ENCODE measurements at regions of chr6 and their contacts with region 1.

Region 1: DNA sequence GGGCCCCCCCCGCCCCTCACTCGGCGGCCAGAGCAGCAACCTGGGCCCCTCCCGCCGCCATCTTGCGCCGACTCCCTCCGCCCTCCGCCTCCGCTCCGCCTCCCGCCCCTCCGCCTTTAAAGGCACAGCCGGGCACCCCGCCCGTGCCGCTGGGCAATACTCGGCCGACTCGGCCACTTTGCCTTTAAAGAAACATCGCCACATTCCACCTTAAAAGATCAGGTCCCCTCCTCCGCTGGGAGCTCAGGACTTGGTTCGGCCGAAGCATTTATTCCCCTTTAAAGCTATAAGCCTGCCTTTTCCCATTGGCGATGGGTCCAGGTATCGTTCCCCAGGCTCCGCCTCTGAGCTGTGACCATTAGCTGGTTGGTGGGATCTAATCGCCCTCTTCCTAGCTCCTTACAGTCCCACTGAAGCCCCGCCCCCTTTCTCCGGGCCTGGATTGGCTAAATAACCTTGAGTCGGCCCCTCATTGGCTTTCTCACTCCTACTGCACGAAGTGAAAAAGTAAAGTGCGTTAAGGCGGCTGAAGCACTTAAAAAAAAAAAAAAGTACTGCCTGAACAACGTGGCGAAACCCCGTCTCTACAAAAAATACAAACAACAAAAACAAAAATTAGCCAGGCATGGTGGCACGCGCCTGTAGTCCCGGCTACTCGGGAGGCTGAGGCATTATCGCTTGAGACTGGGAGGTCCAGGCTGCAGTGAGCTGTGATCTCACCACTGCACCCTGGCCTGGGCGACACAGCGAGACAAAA is at the start of gene ZBTB22:
- DNase-seq: peak; percentile 98
- H3K4me3 Mint-ChIP-seq: peak within 1 kb of the TSS; percentile 96
- H3K27ac Mint-ChIP-seq: peak within 1 kb of the TSS; percentile 96
- H3K4me1 Mint-ChIP-seq: peaks cover 53% of the 10 kb centered on the region
- H3K27me3 Mint-ChIP-seq: no peaks in the 10 kb centered on the region
- total RNA-seq, gene ZBTB22: 11.3 and 14.3 TPM in 2 replicates

Region 2: GRCh38 chr6:33075568-33076405 is 242.1 kb before region 1 on chr6 and contains the start of gene HLA-DPB1:
- intact Hi-C with region 1: no loop called
- DNase-seq: peak; percentile 85
- H3K4me3 Mint-ChIP-seq: peak within 1 kb of the TSS; percentile 80
- H3K27ac Mint-ChIP-seq: peak within 1 kb of the TSS; percentile 79
- H3K4me1 Mint-ChIP-seq: peaks cover 48% of the 10 kb centered on the region
- H3K27me3 Mint-ChIP-seq: peaks cover 2% of the 10 kb centered on the region
- total RNA-seq, gene HLA-DPB1: 4.7 and 6.2 TPM in 2 replicates

Region 3: DNA sequence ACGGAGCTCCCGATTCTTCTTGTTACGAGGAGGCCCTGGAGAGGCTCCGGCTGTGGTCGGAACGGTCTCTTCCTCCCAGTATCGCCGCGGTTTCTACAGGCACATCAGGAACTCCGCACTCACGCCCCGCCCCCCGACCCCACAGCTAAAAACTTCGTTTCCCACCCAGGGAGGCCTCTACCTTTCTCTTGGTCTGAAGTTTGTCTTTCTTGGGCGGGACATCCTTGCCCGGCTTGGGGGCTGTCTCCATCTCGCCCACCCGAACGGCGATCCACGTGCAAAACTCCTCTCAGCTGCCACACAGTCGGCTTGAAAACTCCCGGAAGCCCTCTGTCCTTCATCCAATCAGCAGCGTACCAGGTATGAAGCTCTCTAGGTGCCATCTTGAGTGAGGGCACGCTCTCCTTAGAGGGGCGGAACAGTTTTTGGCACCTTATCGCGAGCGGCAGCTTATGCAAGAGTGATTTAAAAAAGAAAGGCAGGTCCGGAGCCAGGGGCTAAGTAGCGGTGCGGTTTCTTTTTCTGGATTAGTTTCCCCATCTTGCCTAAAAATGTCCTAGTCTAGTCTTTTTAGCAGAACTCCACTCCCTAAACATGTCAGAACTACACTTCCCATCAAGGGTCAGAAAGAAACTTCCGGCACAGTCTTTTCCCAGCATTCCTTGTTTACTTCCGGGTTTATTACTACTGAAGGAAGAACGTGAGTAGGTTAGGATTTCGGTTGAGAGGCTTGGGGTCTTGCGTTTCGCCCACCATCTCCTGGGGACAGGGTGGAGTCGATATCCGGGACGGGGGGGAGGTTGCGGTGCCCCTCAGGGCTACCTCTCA is 28.7 kb before region 1 on chr6 and contains the starts of genes PFDN6 and WDR46:
- intact Hi-C with region 1: loop called (anchors 1 kb)
- DNase-seq: peak; percentile 95
- H3K4me3 Mint-ChIP-seq: peak within 1 kb of the TSS; percentile 100
- H3K27ac Mint-ChIP-seq: peak within 1 kb of the TSS; percentile 95
- H3K4me1 Mint-ChIP-seq: peaks cover 28% of the 10 kb centered on the region
- H3K27me3 Mint-ChIP-seq: no peaks in the 10 kb centered on the region
- total RNA-seq, gene PFDN6: 114 and 132 TPM in 2 replicates
- total RNA-seq, gene WDR46: 106 and 120 TPM in 2 replicates

Region 4: GRCh38 chr6:33344701-33345697 is 27.2 kb after region 1 on chr6:
- intact Hi-C with region 1: loop called (anchors 1 kb)
- DNase-seq: peak; percentile 90
- H3K4me3 Mint-ChIP-seq: peak overlapping the region; percentile 77
- H3K27ac Mint-ChIP-seq: peak overlapping the region; percentile 85
- H3K4me1 Mint-ChIP-seq: peaks cover 29% of the 10 kb centered on the region
- H3K27me3 Mint-ChIP-seq: peaks cover 7% of the 10 kb centered on the region

Region 5: DNA sequence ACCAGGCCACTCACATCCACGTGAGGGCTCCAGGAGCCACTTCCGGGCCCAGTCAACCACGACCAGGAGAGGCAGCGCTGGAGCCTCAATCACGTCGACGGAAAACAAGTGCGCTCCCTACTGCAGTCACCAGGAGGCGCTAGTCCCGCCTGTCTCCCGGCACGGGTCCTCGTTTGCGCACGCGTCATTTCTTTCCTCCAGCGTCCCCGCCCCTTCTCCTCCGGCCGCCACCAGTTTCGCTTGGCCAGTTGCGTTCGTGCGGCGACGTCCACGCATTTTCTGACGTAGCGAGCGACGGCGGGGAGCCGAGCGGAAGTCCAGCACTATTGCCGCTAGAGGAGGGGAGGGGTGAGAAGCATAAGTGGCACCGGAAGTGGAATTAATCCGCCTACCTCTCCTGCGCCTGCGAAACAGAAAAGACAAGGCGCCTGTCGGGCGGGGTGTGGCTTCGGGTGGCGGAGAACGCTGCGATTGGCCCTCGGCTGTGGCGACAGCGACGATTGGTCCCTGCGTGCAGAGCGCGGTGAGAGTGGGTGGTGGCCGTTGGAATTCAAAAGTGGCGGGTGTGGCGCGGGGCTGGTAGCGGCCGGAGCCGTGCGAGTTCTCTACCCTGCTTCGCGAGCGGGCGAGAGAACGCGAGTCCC is 73.6 kb after region 1 on chr6 and contains the start of gene KIFC1:
- intact Hi-C with region 1: loop called (anchors 1 kb)
- DNase-seq: peak; percentile 100
- H3K4me3 Mint-ChIP-seq: peak within 1 kb of the TSS; percentile 89
- H3K27ac Mint-ChIP-seq: peak within 1 kb of the TSS; percentile 97
- H3K4me1 Mint-ChIP-seq: peaks cover 42% of the 10 kb centered on the region
- H3K27me3 Mint-ChIP-seq: peaks cover 2% of the 10 kb centered on the region
- total RNA-seq, gene KIFC1: 64.9 and 66.5 TPM in 2 replicates

Region 6: DNA sequence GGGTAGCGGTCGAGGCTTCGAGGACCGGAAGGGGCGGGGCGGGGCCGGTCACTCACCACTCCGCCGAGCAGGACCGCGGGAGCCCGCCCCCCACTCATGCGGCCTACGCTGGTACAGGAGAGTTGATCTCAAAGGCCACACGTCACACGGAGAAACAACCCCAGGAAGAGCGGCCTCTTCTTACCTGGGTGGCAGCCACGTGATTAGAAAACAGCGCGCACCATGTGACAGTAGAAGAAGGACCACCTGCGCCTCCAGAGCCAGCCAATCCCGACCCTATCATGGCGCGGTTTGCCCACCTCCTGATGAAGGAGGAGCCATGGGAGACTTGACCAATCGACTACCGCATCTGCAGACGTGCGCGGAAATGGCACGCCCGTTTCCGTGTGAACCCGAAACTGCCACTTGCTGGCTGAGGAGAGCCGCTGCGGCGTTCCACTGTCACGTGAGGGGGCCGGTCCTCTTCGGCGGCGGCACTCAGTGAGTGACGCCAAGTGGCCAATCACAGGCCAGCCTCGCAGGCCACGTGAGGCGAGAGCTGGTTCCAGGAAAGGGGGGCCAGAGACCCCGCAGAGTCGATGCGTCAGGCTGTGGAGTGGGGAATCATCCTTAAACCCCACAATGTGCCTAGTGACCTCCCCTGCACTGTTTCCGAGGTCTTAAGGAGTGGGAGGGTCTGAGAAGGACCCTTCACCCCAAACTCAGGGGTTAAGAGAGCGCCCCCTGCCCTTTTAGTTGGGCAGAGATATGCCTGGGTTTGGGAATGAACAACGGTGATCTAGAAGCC is 100.2 kb after region 1 on chr6 and contains the start of gene CUTA:
- intact Hi-C with region 1: loop called (anchors 1 kb)
- DNase-seq: peak; percentile 100
- H3K4me3 Mint-ChIP-seq: peak within 1 kb of the TSS; percentile 92
- H3K27ac Mint-ChIP-seq: peak within 1 kb of the TSS; percentile 96
- H3K4me1 Mint-ChIP-seq: peaks cover 63% of the 10 kb centered on the region
- H3K27me3 Mint-ChIP-seq: peaks cover 1% of the 10 kb centered on the region
- total RNA-seq, gene CUTA: 120 and 124 TPM in 2 replicates

Region 7: GRCh38 chr6:33579828-33580714 is 262.2 kb after region 1 on chr6 and contains the start of gene BAK1:
- intact Hi-C with region 1: loop called (anchors 10 kb)
- DNase-seq: peak; percentile 95
- H3K4me3 Mint-ChIP-seq: peak within 1 kb of the TSS; percentile 94
- H3K27ac Mint-ChIP-seq: peak within 1 kb of the TSS; percentile 92
- H3K4me1 Mint-ChIP-seq: peaks cover 37% of the 10 kb centered on the region
- H3K27me3 Mint-ChIP-seq: no peaks in the 10 kb centered on the region
- total RNA-seq, gene BAK1: 54.7 and 55.9 TPM in 2 replicates

Measured in activated CD4-positive, alpha-beta T cell treated with anti-CD3 and anti-CD28 coated beads, Interleukin-2, amount 10 ng/mL, durations not matched to agents 24 days and 14 days (primary cell).